Aorta (tissue), 5 donors: ENCODE measurements at regions of chr5 and their contacts with region 1.

Region 1: GRCh38 chr5:52665559-52665958 is 122.2 kb upstream of the ITGA1 start:
- DNase-seq: no peak
- ATAC-seq: no peak
- H3K4me3 ChIP-seq: no peak overlapping the region
- H3K27ac ChIP-seq: no peak overlapping the region
- H3K4me1 ChIP-seq: no peaks in the 10 kb centered on the region
- H3K27me3 ChIP-seq: no peaks in the 10 kb centered on the region

Region 2: GRCh38 chr5:52922386-52922785 is 256.8 kb after region 1 on chr5:
- intact Hi-C with region 1: loop called in 1 of 2 experiments (anchors 10 kb)
- DNase-seq: no peak
- ATAC-seq: peak; percentile 64
- H3K4me3 ChIP-seq: no peak overlapping the region
- H3K27ac ChIP-seq: no peak overlapping the region
- H3K4me1 ChIP-seq: peaks cover 2% of the 10 kb centered on the region in 2 donors
- H3K27me3 ChIP-seq: no peaks in the 10 kb centered on the region

Region 3: GRCh38 chr5:53109443-53110127 is 444.0 kb after region 1 on chr5 and contains the start of gene MOCS2:
- intact Hi-C with region 1: loop called in 1 of 2 experiments (anchors 10 kb)
- DNase-seq: peak; percentile 94 to 97
- ATAC-seq: peak; percentile 99
- H3K4me3 ChIP-seq: peak within 1 kb of the TSS; percentile 68 to 92
- H3K27ac ChIP-seq: peak within 1 kb of the TSS in 1 of 2 donors; percentile 53
- H3K4me1 ChIP-seq: peaks cover 0 to 4% of the 10 kb centered on the region in 2 donors
- H3K27me3 ChIP-seq: no peaks in the 10 kb centered on the region
- total RNA-seq, gene MOCS2: 36.5 to 39.2 TPM